Ovary (tissue), 10 donors: ENCODE measurements at regions of chr5 and their contacts with region 1.

Region 1: DNA sequence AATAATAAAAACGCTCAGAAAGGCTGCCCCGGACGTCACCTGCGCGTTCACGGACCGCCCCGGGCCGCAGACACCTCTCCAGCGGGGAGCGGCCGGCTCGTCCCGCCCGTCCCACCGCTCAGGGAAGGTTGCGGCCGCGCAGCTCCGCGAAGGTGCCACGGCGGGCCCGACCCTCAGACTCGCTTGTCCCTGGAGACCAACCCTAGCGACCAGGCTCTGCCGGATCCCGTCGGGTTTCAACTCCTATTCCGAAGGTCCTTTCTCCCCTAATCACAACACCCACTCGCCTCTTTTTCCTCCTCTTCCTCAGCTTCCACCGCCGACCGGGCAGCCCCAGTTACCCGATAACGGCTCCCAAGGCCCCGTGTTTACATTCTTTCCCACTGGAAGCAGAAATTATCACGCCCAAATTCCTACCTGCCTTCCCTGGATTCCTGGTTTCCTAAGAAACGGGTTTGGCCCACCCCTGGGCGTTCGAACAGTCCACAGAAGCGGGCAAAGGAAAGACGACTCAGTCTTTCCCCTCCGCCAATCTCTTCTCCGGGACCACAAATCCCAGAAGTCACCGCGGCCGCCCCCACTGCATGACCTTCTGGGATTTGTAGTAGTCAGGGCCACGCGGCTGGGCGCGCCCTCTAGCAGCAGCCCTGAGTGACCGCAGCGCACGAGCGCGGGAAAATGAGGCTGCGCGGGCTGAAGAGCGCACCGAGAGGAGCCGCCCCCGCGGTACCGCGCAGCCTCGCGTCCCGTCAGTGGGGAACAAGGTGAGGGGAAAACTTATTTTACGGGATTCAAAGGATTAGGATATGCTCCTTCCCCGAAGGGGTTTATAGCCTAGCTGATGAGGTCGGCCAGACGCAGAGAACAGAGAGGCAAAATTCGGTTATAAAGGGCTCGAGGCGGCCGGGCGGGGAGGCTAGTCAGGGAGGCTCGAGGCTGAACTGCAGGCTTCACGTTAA is at the start of gene TTC33:
- DNase-seq: peak; percentile 93 to 96 (median 95)
- H3K4me3 ChIP-seq: peak within 1 kb of the TSS; percentile 71
- H3K27ac ChIP-seq: peak within 1 kb of the TSS; percentile 90 to 94
- H3K4me1 ChIP-seq: peaks cover 4% of the 10 kb centered on the region
- H3K27me3 ChIP-seq: no peaks in the 10 kb centered on the region
- CTCF ChIP-seq: peak; percentile 41 to 80 (median 68)
- EP300 ChIP-seq: no peak
- POLR2A ChIP-seq: peak; percentile 58
- total RNA-seq, gene TTC33: 15.7 to 26.0 (median 19.6) TPM

Region 2: DNA sequence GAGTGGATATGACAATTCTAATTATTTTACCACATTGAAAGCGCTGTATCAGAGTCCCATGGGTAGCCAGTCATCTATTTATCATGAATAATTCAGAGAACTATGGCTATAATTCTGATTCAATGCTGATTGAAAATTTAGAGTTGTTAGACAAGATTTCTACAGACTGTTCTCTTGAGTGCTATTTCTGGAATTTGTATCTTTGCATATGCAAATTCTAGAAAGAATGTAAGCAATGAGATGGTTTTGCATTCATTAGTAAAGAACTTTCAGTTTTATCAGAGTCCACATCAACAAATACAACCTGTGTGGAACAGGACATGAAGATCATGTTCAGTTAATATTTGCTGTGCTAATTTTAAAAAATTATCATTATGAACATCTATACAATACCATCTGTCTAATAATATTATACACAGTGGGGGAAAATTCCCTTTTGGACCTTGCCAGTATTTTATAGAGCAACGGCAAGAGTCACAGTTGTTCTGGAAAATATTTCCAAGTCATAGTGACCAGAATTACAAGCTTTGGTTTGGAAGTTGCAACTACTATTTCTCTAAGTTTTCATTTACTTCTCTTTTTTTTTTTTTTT is 448.7 kb before region 1 on chr5:
- intact Hi-C with region 1: no loop called
- DNase-seq: no peak
- H3K4me3 ChIP-seq: no peak overlapping the region
- H3K27ac ChIP-seq: no peak overlapping the region
- H3K4me1 ChIP-seq: no peaks in the 10 kb centered on the region
- H3K27me3 ChIP-seq: no peaks in the 10 kb centered on the region
- CTCF ChIP-seq: no peak
- EP300 ChIP-seq: no peak
- POLR2A ChIP-seq: no peak

Region 3: GRCh38 chr5:40578501-40579451 is 176.9 kb before region 1 on chr5:
- intact Hi-C with region 1: no loop called
- DNase-seq: no peak
- H3K4me3 ChIP-seq: no peak overlapping the region
- H3K27ac ChIP-seq: no peak overlapping the region
- H3K4me1 ChIP-seq: no peaks in the 10 kb centered on the region
- H3K27me3 ChIP-seq: no peaks in the 10 kb centered on the region
- CTCF ChIP-seq: no peak
- EP300 ChIP-seq: no peak
- POLR2A ChIP-seq: no peak

Region 4: GRCh38 chr5:40672425-40672824 is 83.3 kb before region 1 on chr5:
- intact Hi-C with region 1: no loop called
- DNase-seq: no peak
- H3K4me3 ChIP-seq: no peak overlapping the region
- H3K27ac ChIP-seq: no peak overlapping the region
- H3K4me1 ChIP-seq: no peaks in the 10 kb centered on the region
- H3K27me3 ChIP-seq: no peaks in the 10 kb centered on the region
- CTCF ChIP-seq: no peak
- EP300 ChIP-seq: no peak
- POLR2A ChIP-seq: no peak

Region 5: DNA sequence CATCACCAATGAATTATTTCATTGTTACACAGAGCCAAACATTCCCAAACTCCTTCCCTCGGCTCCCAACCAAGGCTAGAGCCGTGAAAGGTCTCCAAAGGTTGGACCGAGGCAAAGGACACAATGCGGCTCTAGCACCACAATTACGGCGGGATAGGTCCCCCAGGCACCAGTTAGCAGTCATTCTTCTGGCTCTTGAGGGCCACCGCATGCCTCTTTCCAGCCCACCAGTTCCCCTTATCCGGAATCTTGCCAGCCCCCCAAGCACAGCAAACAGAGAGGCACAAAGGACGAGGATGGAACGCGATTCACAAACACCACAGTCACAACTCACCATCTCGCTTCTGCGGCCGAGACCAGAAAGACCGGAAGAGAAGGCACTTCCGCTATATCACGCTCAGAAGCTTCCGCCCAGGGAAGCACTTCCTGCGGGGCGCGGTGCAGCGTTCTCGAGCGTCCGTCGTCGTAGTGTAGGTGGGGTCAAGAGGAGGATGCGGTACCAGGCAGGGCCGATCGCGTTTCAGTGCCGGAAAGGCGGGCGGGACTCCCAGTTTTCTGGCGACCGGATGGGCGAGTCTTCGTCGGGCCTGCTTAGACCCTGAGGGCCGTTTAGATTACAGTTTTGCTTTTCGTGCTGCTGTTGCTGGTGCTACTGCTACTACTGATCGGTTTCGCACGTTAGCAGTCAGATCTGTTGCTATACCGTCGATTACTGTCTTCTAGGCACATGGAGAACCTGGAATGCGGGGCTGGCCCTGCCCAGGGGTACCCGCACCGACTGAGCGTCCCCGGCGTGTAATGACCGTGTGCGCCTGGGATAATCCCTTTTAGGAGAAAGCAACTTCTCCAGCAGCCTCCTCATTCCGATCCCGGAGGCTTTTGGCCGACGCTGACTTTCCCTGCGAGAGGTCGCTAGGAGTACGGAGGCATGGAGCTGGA is 79.4 kb after region 1 on chr5 and contains the start of gene RPL37:
- intact Hi-C with region 1: loop called in 1 of 4 experiments (anchors 10 kb)
- DNase-seq: peak; percentile 95 to 97 (median 96)
- H3K4me3 ChIP-seq: peak within 1 kb of the TSS; percentile 72
- H3K27ac ChIP-seq: peak within 1 kb of the TSS; percentile 90 to 92
- H3K4me1 ChIP-seq: peaks cover 2% of the 10 kb centered on the region
- H3K27me3 ChIP-seq: no peaks in the 10 kb centered on the region
- CTCF ChIP-seq: no peak
- EP300 ChIP-seq: no peak
- POLR2A ChIP-seq: peak; percentile 80
- total RNA-seq, gene RPL37: 686 to 2,915 (median 2,215) TPM

Region 6: DNA sequence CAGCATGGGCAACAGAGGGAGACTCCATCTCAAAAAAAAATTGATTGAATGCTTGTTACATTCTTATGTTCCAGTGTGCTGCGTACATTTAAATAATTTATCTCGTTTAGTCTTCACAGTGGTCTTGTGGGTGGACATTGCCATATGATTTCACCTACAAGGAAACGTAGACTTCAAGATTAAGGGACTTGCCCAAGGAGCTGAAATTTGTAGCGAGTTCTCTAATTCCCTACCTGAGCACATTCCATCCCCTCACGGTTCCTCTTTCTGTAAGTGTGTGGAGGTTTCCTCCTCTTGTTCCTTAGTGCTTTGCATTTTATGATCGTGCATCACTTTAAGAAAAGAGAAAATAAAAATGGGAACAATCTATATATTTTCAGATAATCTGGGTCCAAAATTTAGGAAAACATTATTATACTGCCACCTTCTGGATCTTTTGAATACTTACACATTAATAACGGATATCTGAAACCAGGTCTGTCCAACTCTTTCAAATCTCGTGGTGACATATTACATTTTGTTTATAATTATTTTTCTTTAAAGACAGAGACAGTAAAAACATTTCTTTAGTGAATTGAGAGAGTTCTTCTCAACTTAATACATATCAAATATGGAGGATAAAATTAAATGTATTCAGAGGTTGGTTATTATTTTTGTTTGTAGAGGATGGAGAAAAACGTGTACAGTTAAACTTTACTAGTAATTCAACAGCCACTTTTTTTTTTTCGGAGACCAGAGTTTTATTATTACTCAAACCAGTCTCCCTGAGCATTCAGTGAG is 123.7 kb after region 1 on chr5:
- intact Hi-C with region 1: loop called in 2 of 4 experiments (anchors 5 to 10 kb)
- DNase-seq: no peak
- H3K4me3 ChIP-seq: no peak overlapping the region
- H3K27ac ChIP-seq: no peak overlapping the region
- H3K4me1 ChIP-seq: no peaks in the 10 kb centered on the region
- H3K27me3 ChIP-seq: no peaks in the 10 kb centered on the region
- CTCF ChIP-seq: peak in 2 of 3 donors; percentile 38 to 39
- EP300 ChIP-seq: no peak
- POLR2A ChIP-seq: no peak